Right ventricle myocardium superior (tissue), 1 donor: ENCODE measurements at regions of chr18 and their contacts with region 1.

Region 1: DNA sequence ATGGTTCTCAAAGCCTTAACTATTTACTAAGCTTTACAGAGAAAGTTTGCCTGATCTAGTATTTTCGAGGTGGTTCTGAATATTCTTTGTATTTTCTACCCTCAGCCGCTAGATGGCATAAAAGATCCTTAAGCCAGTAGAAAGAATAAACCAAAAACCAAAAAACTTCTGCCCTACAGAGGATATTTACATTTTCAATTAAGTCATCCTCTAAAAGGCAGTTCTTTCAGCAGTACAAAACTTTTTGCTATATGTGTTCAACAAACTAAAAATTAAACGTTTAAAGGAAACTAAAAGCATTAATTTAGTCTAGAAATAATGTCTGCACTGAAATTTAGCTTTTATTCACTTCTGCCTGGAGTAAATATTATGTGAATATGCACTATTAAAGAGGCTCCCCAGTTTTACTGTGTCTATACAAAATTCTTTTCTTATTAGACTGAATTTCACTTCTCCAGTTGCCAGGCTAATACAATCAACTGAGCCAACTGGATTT is 297.5 kb downstream of the PIEZO2 start:
- DNase-seq: no peak
- ATAC-seq: peak; percentile 49

Region 2: GRCh38 chr18:10953672-10954071 is 101.8 kb after region 1 on chr18:
- intact Hi-C with region 1: no loop called
- DNase-seq: no peak
- ATAC-seq: no peak

Region 3: DNA sequence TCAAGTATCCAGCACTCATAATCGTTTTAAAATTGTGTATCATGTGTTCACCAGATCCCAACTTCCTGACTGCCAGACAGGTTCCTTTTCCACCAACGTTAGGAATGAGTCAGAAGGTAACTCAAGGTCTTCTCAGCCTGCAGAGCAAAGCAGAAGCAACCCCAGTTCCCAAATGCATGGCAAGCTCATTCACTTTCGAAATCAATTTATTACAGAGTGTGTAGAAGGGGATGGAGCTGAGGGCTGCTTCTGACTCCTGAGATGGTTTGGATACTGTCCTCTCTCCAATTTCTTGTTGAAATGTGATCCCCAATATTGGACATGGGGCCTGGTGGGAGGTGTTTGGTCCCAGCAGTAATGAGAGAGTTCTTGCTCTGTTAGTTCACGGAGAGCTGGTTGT is 183.0 kb after region 1 on chr18:
- intact Hi-C with region 1: loop called (anchors 5 kb)
- DNase-seq: no peak
- ATAC-seq: no peak